T-cell (primary cell): ENCODE measurements at regions of chr17 and their contacts with region 1.

Region 1: GRCh38 chr17:77783991-77784820 is 174.3 kb upstream of the TNRC6C start:
- DNase-seq: peak; percentile 42 to 91 (median 79)
- ATAC-seq: peak; percentile 86 to 97 (median 95)
- H3K4me3 ChIP-seq: peak overlapping the region in 1 of 2 donors; percentile 5
- H3K4me3 Mint-ChIP-seq: peak overlapping the region; percentile 37 to 64 (median 59)
- H3K27ac ChIP-seq: peak overlapping the region; percentile 95
- H3K27ac Mint-ChIP-seq: peak overlapping the region; percentile 89 to 98
- H3K4me1 ChIP-seq: peaks cover 2 to 44% of the 10 kb centered on the region in 2 experiments
- H3K4me1 Mint-ChIP-seq: peaks cover 11 to 29% (median 17%) of the 10 kb centered on the region in 3 donors
- H3K27me3 ChIP-seq: peaks cover 0 to 6% of the 10 kb centered on the region in 2 experiments
- H3K27me3 Mint-ChIP-seq: no peaks in the 10 kb centered on the region

Region 2: DNA sequence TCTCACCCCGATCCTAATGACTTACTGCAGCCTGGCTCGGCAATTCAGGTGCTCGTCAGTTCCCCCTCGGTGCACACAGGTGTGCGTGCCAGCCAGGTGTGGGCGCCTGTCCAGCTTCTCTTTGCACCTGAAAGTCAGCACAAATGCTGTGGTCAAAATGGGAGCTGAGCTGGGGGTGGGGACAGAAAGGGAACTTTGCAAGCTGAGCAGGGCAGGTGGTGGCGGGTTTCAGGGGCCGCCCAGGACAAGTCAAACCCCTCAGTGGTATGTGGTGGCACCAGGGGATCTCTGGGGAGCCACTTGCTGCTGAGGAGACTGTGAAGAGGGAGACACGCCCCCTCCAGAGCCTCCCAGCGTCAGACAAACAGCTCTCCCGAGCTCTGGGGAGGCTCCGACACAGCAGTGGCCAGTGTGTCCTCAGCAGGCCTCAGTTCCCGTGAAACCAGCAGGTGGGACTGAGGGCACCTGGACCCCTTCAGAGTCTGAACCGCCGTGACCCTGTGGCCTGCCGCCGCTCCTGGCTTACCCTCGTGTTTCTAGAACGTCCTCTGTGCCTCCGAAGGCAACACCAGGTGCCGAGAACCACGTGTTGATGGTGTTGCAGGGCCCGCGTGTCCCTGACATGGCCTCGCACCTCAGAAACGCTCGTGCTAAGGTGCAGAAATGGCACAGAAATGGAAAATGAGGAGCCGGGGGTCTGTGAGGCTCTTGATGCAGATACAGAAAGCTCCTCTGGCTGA is 59.2 kb before region 1 on chr17:
- CTCF ChIA-PET with region 1: no interaction called
- POLR2A ChIA-PET with region 1: no interaction called
- DNase-seq: peak in 1 of 35 experiments; percentile 21
- ATAC-seq: no peak
- H3K4me3 ChIP-seq: no peak overlapping the region
- H3K4me3 Mint-ChIP-seq: no peak overlapping the region
- H3K27ac ChIP-seq: no peak overlapping the region
- H3K27ac Mint-ChIP-seq: no peak overlapping the region
- H3K4me1 ChIP-seq: peaks cover 0 to 4% of the 10 kb centered on the region in 2 experiments
- H3K4me1 Mint-ChIP-seq: peaks cover 2 to 6% (median 3%) of the 10 kb centered on the region in 3 donors
- H3K27me3 ChIP-seq: peaks cover 0 to 23% of the 10 kb centered on the region in 2 experiments
- H3K27me3 Mint-ChIP-seq: peaks cover 0 to 4% of the 10 kb centered on the region in 2 donors

Region 3: GRCh38 chr17:77881545-77881944 is 97.3 kb after region 1 on chr17:
- CTCF ChIA-PET with region 1: no interaction called
- POLR2A ChIA-PET with region 1: interaction called in 1 of 2 experiments, 11 read pairs
- DNase-seq: peak; percentile 56 to 85 (median 68)
- ATAC-seq: peak; percentile 19 to 71 (median 58)
- H3K4me3 ChIP-seq: peak overlapping the region; percentile 48 to 66
- H3K4me3 Mint-ChIP-seq: peak overlapping the region; percentile 73 to 87 (median 78)
- H3K27ac ChIP-seq: peak overlapping the region; percentile 99
- H3K27ac Mint-ChIP-seq: peak overlapping the region; percentile 95 to 98
- H3K4me1 ChIP-seq: peaks cover 49 to 87% of the 10 kb centered on the region in 2 experiments
- H3K4me1 Mint-ChIP-seq: peaks cover 89 to 98% (median 90%) of the 10 kb centered on the region in 3 donors
- H3K27me3 ChIP-seq: no peaks in the 10 kb centered on the region
- H3K27me3 Mint-ChIP-seq: no peaks in the 10 kb centered on the region